IMR-90 (cell line): ENCODE measurements at regions of chr2 and their contacts with region 1.

Region 1: GRCh38 chr2:201231781-201232466 is 28.4 kb upstream of the CASP8 start:
- DNase-seq: peak; percentile 87
- ATAC-seq: peak; percentile 74
- H3K4me3 ChIP-seq: no peak overlapping the region
- H3K27ac ChIP-seq: peak overlapping the region; percentile 47; the same call in 1 of the 2 replicates
- H3K4me1 ChIP-seq: peaks cover 6% of the 10 kb centered on the region; the same call in 1 of the 2 replicates
- H3K27me3 ChIP-seq: no peaks in the 10 kb centered on the region
- CTCF ChIP-seq: peak; percentile 83
- POLR2A ChIP-seq: no peak
- RAD21 ChIP-seq: peak; percentile 75

Region 2: GRCh38 chr2:200713003-200713703 is 518.8 kb before region 1 on chr2:
- CTCF ChIA-PET with region 1: no interaction called
- POLR2A ChIA-PET with region 1: no interaction called
- dilution Hi-C with region 1: no loop called
- in situ Hi-C with region 1: no loop called
- intact Hi-C with region 1: no loop called
- DNase-seq: peak; percentile 95
- ATAC-seq: peak; percentile 98
- H3K4me3 ChIP-seq: peak overlapping the region; percentile 23
- H3K27ac ChIP-seq: peak overlapping the region; percentile 33
- H3K4me1 ChIP-seq: peaks cover 4% of the 10 kb centered on the region
- H3K27me3 ChIP-seq: peaks cover under 1% of the 10 kb centered on the region; the same call in 1 of the 2 replicates
- CTCF ChIP-seq: peak; percentile 94
- POLR2A ChIP-seq: peak; percentile 70; the same call in 1 of the 2 replicates
- RAD21 ChIP-seq: peak; percentile 96

Region 3: GRCh38 chr2:201182650-201183364 is 49.1 kb before region 1 on chr2 and contains the start of gene CASP10:
- CTCF ChIA-PET with region 1: interaction called, 6 read pairs
- POLR2A ChIA-PET with region 1: no interaction called
- dilution Hi-C with region 1: no loop called
- in situ Hi-C with region 1: no loop called
- intact Hi-C with region 1: loop called (anchors 1 kb)
- DNase-seq: peak; percentile 55
- ATAC-seq: peak; percentile 73
- H3K4me3 ChIP-seq: no peak within 1 kb of the TSS; the same call in 1 of the 2 replicates
- H3K27ac ChIP-seq: no peak within 1 kb of the TSS
- H3K4me1 ChIP-seq: peaks cover 2% of the 10 kb centered on the region; the same call in 1 of the 2 replicates
- H3K27me3 ChIP-seq: peaks cover 2% of the 10 kb centered on the region; the same call in 1 of the 2 replicates
- CTCF ChIP-seq: peak; percentile 37
- POLR2A ChIP-seq: no peak
- RAD21 ChIP-seq: peak; percentile 14; the same call in 1 of the 2 replicates
- total RNA-seq, gene CASP10: 0.28 and 0.90 TPM in 2 replicates

Region 4: DNA sequence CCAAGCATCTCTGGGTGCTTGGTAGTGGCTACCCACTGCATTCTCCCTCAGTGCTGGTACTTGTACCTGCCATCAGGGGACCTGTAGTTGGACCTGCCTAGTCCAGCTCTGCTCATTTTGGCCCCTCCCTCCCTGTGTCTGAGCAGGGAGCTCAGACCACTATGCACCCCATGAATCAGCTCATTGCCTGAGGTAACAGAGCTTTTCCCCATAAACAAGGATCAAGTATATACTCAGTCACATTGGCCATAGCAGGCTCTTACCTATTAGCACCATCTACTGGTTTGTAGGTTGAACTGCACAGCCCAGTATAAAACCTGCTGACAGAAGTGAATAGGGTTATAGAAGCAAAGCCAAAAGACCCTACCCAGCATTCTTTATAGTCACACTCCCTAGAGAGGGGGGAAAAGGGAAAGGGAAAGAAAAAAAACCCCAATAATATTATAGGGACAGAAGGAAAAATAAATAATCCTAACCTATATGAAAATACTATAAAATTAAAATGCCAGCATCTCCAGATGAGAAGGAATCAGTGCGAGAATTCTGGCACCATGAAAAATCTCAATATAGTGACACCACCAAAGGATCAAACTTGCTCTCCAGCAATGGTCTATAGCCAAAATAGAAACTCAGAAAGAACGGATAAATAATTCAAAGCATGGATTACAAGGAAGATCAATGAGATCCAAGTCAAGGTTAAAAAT is 132.1 kb after region 1 on chr2:
- CTCF ChIA-PET with region 1: no interaction called
- POLR2A ChIA-PET with region 1: no interaction called
- dilution Hi-C with region 1: no loop called
- in situ Hi-C with region 1: no loop called
- intact Hi-C with region 1: loop called (anchors 1 kb)
- DNase-seq: peak; percentile 71
- ATAC-seq: peak; percentile 97
- H3K4me3 ChIP-seq: no peak overlapping the region
- H3K27ac ChIP-seq: no peak overlapping the region
- H3K4me1 ChIP-seq: peaks cover 2% of the 10 kb centered on the region; the same call in 1 of the 2 replicates
- H3K27me3 ChIP-seq: no peaks in the 10 kb centered on the region
- CTCF ChIP-seq: peak; percentile 86
- POLR2A ChIP-seq: no peak
- RAD21 ChIP-seq: peak; percentile 81

Region 5: GRCh38 chr2:201618744-201619662 is 387.1 kb after region 1 on chr2:
- CTCF ChIA-PET with region 1: no interaction called
- POLR2A ChIA-PET with region 1: no interaction called
- dilution Hi-C with region 1: no loop called
- in situ Hi-C with region 1: loop called (anchors 25 kb)
- intact Hi-C with region 1: loop called (anchors 2 kb)
- DNase-seq: peak; percentile 50
- ATAC-seq: peak; percentile 96
- H3K4me3 ChIP-seq: no peak overlapping the region
- H3K27ac ChIP-seq: no peak overlapping the region
- H3K4me1 ChIP-seq: no peaks in the 10 kb centered on the region
- H3K27me3 ChIP-seq: no peaks in the 10 kb centered on the region
- CTCF ChIP-seq: peak; percentile 42
- POLR2A ChIP-seq: no peak
- RAD21 ChIP-seq: peak; percentile 56

Region 6: DNA sequence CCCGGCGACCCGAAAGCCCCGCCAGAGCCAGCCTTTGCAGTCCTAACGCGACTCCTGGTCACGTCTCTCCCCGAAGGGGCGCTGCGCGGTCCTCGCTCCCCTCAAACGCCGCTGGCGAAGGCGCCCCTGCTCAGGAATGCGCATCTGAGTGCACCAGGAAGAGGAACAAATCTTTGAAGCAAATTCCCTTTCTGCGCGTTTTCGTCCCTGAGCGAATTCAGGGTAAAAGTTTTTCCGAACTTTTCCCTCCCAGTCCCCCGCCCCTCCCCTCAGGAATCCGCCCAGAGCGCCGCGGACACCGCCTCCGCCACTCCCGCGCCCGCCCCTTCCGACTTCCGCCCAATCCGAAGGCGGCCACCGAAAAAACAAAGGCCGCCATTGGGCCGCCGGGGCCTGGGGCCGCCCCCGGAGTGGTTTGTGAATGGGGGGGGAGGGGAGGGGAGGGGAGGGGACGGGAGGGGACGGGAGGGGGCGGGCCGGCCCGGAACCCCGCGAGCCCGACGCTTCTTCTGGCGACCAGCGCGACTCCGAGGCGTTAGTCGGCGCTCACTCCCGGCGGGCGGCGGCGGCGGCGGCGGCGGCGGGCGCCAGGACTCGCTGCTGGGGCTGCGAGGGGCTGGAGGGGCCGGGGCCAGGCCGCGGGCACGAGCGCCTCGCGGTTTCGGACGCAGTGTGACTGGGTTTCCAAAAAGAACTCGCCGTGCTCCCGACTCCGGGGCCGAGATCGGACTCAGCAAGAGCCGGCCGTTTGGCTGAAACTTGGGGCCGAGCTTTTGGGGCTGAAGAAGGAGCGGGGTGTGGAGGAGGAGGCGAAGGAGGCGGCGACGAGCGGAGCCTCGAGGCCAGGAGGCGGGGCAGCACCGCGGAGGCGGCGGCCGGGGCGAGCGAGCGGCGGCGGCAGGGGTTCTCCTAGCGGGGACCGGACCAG is 801.7 kb after region 1 on chr2 and contains the start of gene FZD7:
- CTCF ChIA-PET with region 1: no interaction called
- POLR2A ChIA-PET with region 1: no interaction called
- dilution Hi-C with region 1: no loop called
- in situ Hi-C with region 1: no loop called
- intact Hi-C with region 1: loop called (anchors 2 kb)
- DNase-seq: peak; percentile 92
- ATAC-seq: peak; percentile 73
- H3K4me3 ChIP-seq: peak within 1 kb of the TSS; percentile 94
- H3K27ac ChIP-seq: peak within 1 kb of the TSS; percentile 98
- H3K4me1 ChIP-seq: peaks cover 6% of the 10 kb centered on the region
- H3K27me3 ChIP-seq: no peaks in the 10 kb centered on the region
- CTCF ChIP-seq: 0 out of 2 replicates have a peak, but pooled peaks have one; percentile 0
- POLR2A ChIP-seq: peak; percentile 73
- RAD21 ChIP-seq: peak; percentile 24
- total RNA-seq, gene FZD7: 62.4 and 81.1 TPM in 2 replicates